ENCODE measurements at regions of chr19 and their contacts with region 1.

Region 1: DNA sequence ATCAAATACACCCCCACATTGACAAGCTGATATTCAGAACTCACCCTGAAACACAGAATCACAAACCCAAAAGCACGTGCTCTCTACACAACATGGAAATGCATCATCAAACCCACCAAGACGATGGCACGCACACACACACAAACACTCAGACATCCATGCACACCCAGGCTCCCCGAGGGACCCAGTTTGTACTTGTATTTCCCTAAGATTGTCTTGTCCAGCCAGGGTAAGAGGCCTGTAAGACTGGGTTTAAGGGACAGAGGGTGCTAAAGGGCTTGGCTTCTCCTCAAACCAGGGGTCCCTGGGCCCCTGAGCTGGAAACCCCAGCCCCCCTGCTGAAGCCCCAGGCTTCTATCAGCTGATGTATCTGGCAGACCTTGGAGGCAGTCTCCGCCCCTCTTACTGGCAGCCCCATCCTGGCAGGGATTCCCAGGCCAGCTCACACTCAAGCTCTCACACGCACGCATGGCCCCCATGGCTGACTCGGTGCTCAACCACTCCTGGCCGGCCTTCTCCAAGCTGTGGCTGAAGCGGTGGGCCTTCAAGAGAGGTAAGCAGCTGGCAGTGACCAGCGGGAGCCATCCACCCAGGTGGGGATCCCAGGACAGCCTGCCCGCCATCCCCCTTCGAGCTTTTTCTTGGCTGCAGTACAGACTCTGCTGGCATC is 6.5 kb downstream of the ARHGEF18 start:
- DNase-seq: no peak
- H3K4me3 ChIP-seq: no peak overlapping the region
- H3K27ac ChIP-seq: no peak overlapping the region
- H3K4me1 ChIP-seq: no peaks in the 10 kb centered on the region; a peak in 1 of 7 replicates
- H3K27me3 ChIP-seq: peaks cover 0 to 2% (median 0%) of the 10 kb centered on the region in 4 experiments; a peak in 1 of 7 replicates
- CTCF ChIP-seq: no peak
- EP300 ChIP-seq: no peak
- POLR2A ChIP-seq: no peak
- RAD21 ChIP-seq: no peak

Region 2: DNA sequence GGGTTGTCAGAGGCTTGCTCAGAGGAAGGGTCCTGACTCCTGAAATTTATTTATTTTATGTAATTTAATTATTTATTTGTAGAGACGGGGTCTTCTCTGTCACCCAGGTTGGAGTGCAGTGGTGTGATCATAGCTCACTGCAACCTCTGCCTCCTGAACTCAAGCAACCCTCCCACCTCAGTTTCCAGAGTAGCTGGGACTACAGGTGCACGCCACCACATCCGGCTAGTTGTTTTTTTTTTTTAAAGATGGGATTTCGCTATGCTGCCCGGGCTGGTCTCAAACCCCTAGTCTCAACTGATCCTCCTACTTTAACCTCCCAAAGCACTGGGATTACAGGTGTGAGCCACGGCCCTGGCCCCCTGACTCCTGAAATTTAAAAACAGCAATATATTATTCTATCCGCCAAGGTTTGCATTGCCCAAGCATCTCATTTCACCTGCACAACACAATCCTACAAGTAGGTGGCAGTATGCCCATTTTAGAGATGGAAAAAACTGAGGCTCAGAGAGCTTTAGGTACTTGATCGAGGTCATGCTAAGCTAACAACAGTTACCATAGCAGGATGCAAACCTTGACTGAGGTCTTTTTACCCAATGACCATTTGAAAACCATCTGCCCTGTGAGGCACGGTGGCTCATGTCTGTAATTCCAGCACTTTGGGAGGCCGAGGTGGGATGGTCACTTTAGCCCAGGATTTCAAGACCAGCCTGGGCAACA is 11.6 kb after region 1 on chr19:
- CTCF ChIA-PET with region 1: interaction called, 57 read pairs
- POLR2A ChIA-PET with region 1: interaction called, 4 read pairs
- DNase-seq: no peak
- H3K4me3 ChIP-seq: no peak overlapping the region
- H3K27ac ChIP-seq: no peak overlapping the region
- H3K4me1 ChIP-seq: peaks cover 0 to 3% (median 0%) of the 10 kb centered on the region in 4 experiments; a peak in 1 of 7 replicates
- H3K27me3 ChIP-seq: peaks cover 0 to 2% (median 0%) of the 10 kb centered on the region in 4 experiments; a peak in 3 of 7 replicates
- CTCF ChIP-seq: peak in 2 of 3 experiments; percentile 34 to 52; a peak in 2 of 4 replicates
- EP300 ChIP-seq: no peak
- POLR2A ChIP-seq: no peak
- RAD21 ChIP-seq: peak; percentile 57 to 58; a peak in 3 of 4 replicates

Region 3: GRCh38 chr19:7373862-7374261 is 18.6 kb after region 1 on chr19:
- CTCF ChIA-PET with region 1: interaction called, 85 read pairs
- POLR2A ChIA-PET with region 1: interaction called, 3 read pairs
- DNase-seq: no peak
- H3K4me3 ChIP-seq: no peak overlapping the region
- H3K27ac ChIP-seq: no peak overlapping the region
- H3K4me1 ChIP-seq: peaks cover 0 to 6% (median 3%) of the 10 kb centered on the region in 4 experiments; a peak in 3 of 7 replicates
- H3K27me3 ChIP-seq: no peaks in the 10 kb centered on the region
- CTCF ChIP-seq: no peak
- EP300 ChIP-seq: no peak
- POLR2A ChIP-seq: no peak
- RAD21 ChIP-seq: no peak

Region 4: DNA sequence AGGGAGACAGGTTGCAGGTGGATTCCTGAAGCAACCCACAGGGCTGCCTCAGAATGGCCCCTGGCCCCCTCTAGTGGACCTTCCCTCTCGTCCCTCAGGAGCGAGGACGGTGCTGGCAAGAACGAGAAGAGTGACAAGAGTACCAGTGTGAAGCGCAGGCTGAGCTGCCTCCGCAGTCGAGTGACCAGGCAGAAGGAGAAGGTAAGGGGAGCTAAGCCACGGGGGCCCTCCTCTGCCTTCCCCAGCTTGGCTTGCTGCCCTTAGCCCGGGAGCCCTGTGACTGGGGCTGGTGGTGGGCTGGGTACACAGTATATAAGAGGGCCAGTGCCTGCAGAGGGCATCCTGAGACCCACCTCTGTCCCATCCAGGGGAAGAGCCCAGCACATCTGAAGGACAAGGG is 27.4 kb after region 1 on chr19:
- CTCF ChIA-PET with region 1: interaction called, 85 read pairs
- POLR2A ChIA-PET with region 1: no interaction called
- DNase-seq: peak in 1 of 2 experiments; percentile 50
- H3K4me3 ChIP-seq: no peak overlapping the region
- H3K27ac ChIP-seq: no peak overlapping the region
- H3K4me1 ChIP-seq: 0 out of 7 replicates have a peak, but pooled peaks cover 0 to 2% (median 0%) of the 10 kb centered on the region in 4 experiments
- H3K27me3 ChIP-seq: no peaks in the 10 kb centered on the region
- CTCF ChIP-seq: peak; percentile 16 to 45 (median 38); a peak in 3 of 4 replicates
- EP300 ChIP-seq: no peak
- POLR2A ChIP-seq: no peak
- RAD21 ChIP-seq: no peak; a peak in 1 of 4 replicates

Region 5: GRCh38 chr19:7394731-7395359 is 39.6 kb after region 1 on chr19:
- CTCF ChIA-PET with region 1: interaction called, 13 read pairs
- POLR2A ChIA-PET with region 1: interaction called, 3 read pairs
- DNase-seq: peak; percentile 68 to 99
- H3K4me3 ChIP-seq: peak overlapping the region; percentile 91 to 96 (median 94)
- H3K27ac ChIP-seq: peak overlapping the region; percentile 42; the same call in 1 of the 2 replicates
- H3K4me1 ChIP-seq: peaks cover 0 to 8% (median 4%) of the 10 kb centered on the region in 4 experiments
- H3K27me3 ChIP-seq: 0 out of 7 replicates have a peak, but pooled peaks cover 0 to 1% (median 0%) of the 10 kb centered on the region in 4 experiments
- CTCF ChIP-seq: no peak
- EP300 ChIP-seq: no peak
- POLR2A ChIP-seq: peak in 1 of 2 experiments; percentile 71; a peak in 2 of 3 replicates
- RAD21 ChIP-seq: no peak

Region 6: GRCh38 chr19:7461841-7462750 is 106.8 kb after region 1 on chr19:
- CTCF ChIA-PET with region 1: interaction called, 12 read pairs
- POLR2A ChIA-PET with region 1: no interaction called
- DNase-seq: peak in 1 of 2 experiments; percentile 64
- H3K4me3 ChIP-seq: no peak overlapping the region
- H3K27ac ChIP-seq: no peak overlapping the region
- H3K4me1 ChIP-seq: no peaks in the 10 kb centered on the region
- H3K27me3 ChIP-seq: no peaks in the 10 kb centered on the region; a peak in 1 of 7 replicates
- CTCF ChIP-seq: peak; percentile 34 to 67 (median 45)
- EP300 ChIP-seq: no peak
- POLR2A ChIP-seq: no peak
- RAD21 ChIP-seq: peak; percentile 35 to 51; a peak in 3 of 4 replicates

Measured in H1 (cell line).